Transverse colon (tissue), 4 donors: ENCODE measurements at regions of chr12 and their contacts with region 1.

Region 1: GRCh38 chr12:30806989-30807694 is 52.4 kb upstream of the CAPRIN2 start:
- DNase-seq: no peak
- H3K4me3 ChIP-seq: no peak overlapping the region
- H3K27ac ChIP-seq: no peak overlapping the region
- H3K4me1 ChIP-seq: peaks cover 0 to 3% (median 0%) of the 10 kb centered on the region in 4 donors
- H3K27me3 ChIP-seq: no peaks in the 10 kb centered on the region
- CTCF ChIP-seq: peak; percentile 65 to 79 (median 74)
- EP300 ChIP-seq: no peak
- POLR2A ChIP-seq: no peak

Region 2: DNA sequence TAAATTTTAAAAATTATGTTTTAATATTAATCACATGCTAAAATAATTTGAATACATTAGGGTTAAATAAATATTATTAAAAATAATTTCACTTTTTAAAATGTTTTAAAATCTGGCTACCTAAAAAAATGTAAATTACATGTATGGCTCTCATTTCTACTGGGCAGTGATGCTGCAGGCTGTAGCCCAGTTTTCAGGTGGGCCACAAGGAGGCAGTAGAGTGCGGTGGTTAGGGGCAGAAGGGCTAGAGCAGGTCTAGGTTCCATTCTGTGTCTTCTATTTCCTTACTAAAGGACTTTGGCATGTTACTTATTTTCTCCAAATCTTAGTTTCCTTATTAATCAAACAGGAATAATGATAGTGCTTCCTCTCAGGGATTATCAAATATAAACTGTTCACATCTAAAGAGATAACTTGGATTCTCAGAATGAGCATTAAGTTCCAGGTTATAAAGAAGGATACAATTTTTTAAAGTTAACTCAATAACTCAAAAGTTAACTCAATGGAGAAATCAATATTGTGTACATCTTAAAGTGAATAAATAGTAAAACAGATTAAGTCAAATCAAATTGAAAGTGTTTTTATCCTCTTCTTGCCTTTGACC is 1254.7 kb before region 1 on chr12:
- in situ Hi-C with region 1: loop called in 3 of 4 experiments (anchors 10 to 25 kb)
- intact Hi-C with region 1: no loop called
- DNase-seq: peak; percentile 69
- H3K4me3 ChIP-seq: no peak overlapping the region
- H3K27ac ChIP-seq: no peak overlapping the region
- H3K4me1 ChIP-seq: no peaks in the 10 kb centered on the region
- H3K27me3 ChIP-seq: no peaks in the 10 kb centered on the region
- CTCF ChIP-seq: peak; percentile 69 to 89 (median 84)
- EP300 ChIP-seq: no peak
- POLR2A ChIP-seq: no peak

Region 3: GRCh38 chr12:30450872-30451271 is 356.3 kb before region 1 on chr12:
- in situ Hi-C with region 1: no loop called
- intact Hi-C with region 1: no loop called
- DNase-seq: no peak
- H3K4me3 ChIP-seq: no peak overlapping the region
- H3K27ac ChIP-seq: no peak overlapping the region
- H3K4me1 ChIP-seq: no peaks in the 10 kb centered on the region
- H3K27me3 ChIP-seq: no peaks in the 10 kb centered on the region
- CTCF ChIP-seq: no peak
- EP300 ChIP-seq: no peak
- POLR2A ChIP-seq: no peak

Region 4: DNA sequence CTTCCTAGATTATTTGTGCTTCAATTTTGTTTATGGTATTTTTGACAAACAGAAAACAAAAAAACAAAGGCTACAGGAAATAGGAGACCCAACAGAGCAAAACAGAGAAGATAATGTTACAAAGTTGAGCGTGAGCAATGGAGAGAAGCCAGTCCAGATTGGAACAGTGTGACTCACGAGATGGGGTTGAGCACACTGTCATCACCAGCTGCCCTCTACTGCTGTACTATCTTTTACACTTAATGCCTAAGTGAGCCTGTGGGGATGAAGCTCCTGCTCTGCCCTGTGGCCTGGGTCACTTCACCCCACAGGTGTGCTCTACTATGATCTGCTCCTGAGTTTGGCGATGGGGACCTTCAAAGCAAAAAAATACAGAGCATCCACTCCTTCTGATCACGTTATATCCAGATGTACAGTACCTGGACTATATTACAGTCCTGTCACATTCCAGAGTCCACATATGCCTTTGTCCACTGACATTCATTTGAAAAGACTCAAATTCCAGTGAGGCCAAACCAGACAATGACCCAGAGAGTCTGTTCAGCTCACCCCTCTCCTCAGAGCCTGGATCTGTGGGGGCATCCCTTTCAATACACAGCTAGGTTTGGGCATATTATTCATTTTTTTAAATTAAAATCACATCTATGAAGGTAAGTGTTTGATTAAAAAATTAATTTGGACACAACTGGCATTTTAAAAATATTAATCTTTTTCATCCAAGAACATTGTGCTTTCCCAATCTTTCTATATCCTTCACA is 115.8 kb before region 1 on chr12:
- in situ Hi-C with region 1: no loop called
- intact Hi-C with region 1: no loop called
- DNase-seq: no peak
- H3K4me3 ChIP-seq: no peak overlapping the region
- H3K27ac ChIP-seq: no peak overlapping the region
- H3K4me1 ChIP-seq: peaks cover 13 to 34% (median 14%) of the 10 kb centered on the region in 4 donors
- H3K27me3 ChIP-seq: no peaks in the 10 kb centered on the region
- CTCF ChIP-seq: no peak
- EP300 ChIP-seq: no peak
- POLR2A ChIP-seq: no peak